ENCODE measurements at regions of chr10 and their contacts with region 1.

Region 1: DNA sequence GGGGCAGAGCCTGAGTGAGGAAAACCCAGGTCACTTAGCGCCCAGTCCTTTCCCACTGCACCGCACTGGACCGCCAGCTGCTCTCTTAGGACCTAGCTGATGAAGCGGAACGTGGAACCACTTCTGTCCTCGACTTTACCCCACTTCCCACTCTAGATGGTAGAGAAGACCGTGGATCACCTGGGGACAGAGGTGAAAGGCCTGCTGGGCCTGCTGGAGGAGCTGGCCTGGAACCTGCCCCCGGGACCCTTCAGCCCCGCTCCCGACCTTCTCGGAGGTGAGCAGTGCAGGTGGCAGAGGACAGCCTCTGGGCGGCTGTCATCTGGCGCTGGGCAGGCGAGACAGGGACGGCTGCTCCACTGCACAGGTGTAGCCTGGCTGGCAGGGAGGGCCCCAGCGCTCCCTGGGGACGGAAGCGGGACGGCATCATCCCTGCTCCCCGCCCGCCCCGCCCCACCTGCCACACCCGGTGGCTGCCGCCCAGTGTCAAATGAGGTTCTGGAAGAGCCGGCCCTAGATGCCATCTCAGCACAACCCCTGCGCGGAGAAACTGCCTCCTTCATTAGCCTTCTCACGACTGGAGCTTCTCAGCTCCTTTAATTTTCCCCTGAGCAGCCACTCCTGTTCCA is 11.7 kb downstream of the PLAC9 start:
- DNase-seq: no peak
- ATAC-seq: peak; percentile 45

Region 2: DNA sequence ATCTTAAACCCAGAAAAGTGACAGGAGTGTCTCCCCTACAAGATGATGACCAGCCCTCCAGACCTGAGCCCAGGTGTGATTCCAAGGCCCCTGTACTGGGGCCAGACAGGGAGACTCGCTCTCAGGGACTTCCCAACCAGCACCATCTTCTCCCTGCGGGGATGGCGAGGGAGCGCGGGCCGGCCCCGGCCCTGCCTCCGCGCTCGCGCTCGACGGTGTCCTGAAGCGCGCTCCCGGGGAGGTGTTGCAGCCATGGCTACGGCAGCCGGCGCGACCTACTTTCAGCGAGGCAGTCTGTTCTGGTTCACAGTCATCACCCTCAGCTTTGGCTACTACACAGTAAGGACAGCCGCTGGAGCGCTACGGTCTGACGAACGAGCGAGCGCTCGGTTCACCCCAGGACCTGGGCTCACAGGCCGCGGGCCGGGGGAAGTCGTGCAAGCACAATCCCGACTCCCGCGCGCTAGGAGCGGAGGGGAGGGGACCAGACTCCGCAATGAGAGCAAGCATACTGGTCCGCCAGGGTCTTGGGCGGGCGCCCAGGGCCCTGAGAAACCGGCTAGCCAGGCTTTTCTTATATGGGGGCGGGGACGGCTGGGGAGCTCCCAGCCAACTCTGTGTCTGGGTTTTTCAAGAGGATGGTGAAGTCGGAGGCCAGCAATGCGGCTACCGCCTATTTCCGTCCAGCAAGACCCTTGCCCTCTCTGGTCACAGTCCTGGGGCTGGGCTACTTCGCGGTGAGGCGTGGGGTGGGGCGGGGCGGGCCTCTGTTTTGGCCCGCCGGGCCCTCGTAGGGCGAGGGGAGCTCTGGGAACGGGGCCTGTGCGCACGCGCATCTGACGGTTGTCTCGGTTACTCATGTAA is 65.5 kb before region 1 on chr10 and contains the start of gene TMEM254:
- intact Hi-C with region 1: loop called in 1 of 2 experiments (anchors 5 kb)
- DNase-seq: peak; percentile 96
- ATAC-seq: peak; percentile 96 to 98
- total RNA-seq, gene TMEM254: 5.4 to 12.3 TPM

Region 3: DNA sequence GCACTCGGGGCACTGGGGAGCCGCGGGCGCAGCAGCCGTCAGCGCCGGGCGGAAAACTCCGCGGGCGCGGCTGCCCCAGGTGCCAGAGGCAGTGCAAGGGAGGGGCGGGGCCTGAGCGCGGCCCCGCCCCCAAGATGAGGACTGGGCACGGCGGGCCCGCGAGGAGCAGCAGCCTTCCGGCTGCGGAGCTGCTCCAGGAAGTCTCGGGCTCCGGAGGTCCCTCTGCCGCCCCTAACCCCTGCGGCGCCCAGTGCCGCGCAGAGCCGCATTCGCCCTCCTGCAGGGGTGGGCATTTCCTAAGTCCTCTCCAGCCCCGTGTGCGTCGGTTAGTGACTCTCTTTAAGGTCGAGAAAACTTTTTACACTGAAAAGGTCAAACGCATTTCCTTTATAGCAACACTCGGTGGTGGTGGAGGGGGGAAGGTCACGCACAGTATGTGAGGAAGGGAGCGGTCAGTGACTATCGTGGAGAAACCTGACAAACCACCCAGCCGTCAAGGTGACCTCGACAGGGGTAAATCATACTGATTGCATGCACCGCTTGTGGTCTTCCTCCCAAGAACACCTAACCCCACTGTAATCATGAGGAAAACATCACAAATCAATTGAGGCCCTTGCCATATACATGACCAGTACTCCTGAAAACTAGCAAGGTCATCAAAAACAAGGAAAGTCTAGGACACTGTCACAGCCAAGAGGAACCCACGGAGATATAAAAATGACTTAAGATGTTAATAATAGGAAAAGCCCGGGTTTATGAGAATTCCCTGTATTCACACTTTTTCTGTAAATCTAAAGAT is 61.5 kb after region 1 on chr10 and contains the start of gene ANXA11:
- intact Hi-C with region 1: loop called in 1 of 2 experiments (anchors 5 kb)
- DNase-seq: peak; percentile 87
- ATAC-seq: peak; percentile 83 to 85
- total RNA-seq, gene ANXA11: 327 to 413 TPM